B cell (primary cell): ENCODE measurements at regions of chr6 and their contacts with region 1.

Region 1: GRCh38 chr6:75208298-75209183 is 2.7 kb upstream of the COL12A1 start:
- DNase-seq: peak; percentile 87
- ATAC-seq: peak; percentile 80
- H3K4me3 ChIP-seq: peak overlapping the region in 4 of 5 experiments; percentile 10 to 41 (median 20)
- H3K4me3 Mint-ChIP-seq: peak overlapping the region; percentile 80
- H3K27ac ChIP-seq: no peak overlapping the region
- H3K27ac Mint-ChIP-seq: no peak overlapping the region
- H3K4me1 ChIP-seq: peaks cover 49 to 50% of the 10 kb centered on the region in 2 donors
- H3K4me1 Mint-ChIP-seq: peaks cover 52% of the 10 kb centered on the region
- H3K27me3 ChIP-seq: peaks cover 0 to 72% (median 52%) of the 10 kb centered on the region in 4 experiments
- H3K27me3 Mint-ChIP-seq: peaks cover 71% of the 10 kb centered on the region
- CTCF ChIP-seq: peak; percentile 84

Region 2: GRCh38 chr6:73675466-73676098 is 1533.0 kb before region 1 on chr6:
- CTCF ChIA-PET with region 1: interaction called, 45 read pairs
- POLR2A ChIA-PET with region 1: no interaction called
- intact Hi-C with region 1: loop called (anchors 2 kb)
- DNase-seq: peak; percentile 68
- ATAC-seq: peak; percentile 75
- H3K4me3 ChIP-seq: no peak overlapping the region
- H3K4me3 Mint-ChIP-seq: no peak overlapping the region
- H3K27ac ChIP-seq: no peak overlapping the region
- H3K27ac Mint-ChIP-seq: no peak overlapping the region
- H3K4me1 ChIP-seq: no peaks in the 10 kb centered on the region
- H3K4me1 Mint-ChIP-seq: no peaks in the 10 kb centered on the region
- H3K27me3 ChIP-seq: peaks cover 0 to 3% (median 0%) of the 10 kb centered on the region in 4 experiments
- H3K27me3 Mint-ChIP-seq: peaks cover 17% of the 10 kb centered on the region
- CTCF ChIP-seq: peak; percentile 96

Region 3: DNA sequence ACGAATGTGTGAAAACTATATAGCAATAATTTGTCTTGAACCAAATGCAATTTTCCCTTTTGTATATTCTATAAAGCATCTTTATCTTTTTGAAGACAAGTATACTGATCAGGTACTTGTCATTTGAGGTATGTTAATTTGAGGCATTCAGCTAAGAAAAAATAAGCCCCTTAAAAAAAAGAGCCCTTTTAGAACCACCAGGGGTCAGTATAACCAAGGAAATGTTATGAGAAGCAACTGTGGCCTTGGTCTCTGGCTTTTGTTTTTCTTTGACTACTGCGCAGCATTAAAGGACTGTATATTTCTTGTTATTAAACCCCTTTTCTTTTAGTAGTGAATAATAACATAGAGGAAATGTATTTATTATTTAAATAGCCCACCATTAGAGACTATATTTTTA is 1469.4 kb before region 1 on chr6:
- CTCF ChIA-PET with region 1: interaction called, 388 read pairs
- POLR2A ChIA-PET with region 1: no interaction called
- intact Hi-C with region 1: loop called (anchors 1 kb)
- DNase-seq: peak; percentile 74
- ATAC-seq: peak; percentile 51
- H3K4me3 ChIP-seq: no peak overlapping the region
- H3K4me3 Mint-ChIP-seq: no peak overlapping the region
- H3K27ac ChIP-seq: no peak overlapping the region
- H3K27ac Mint-ChIP-seq: no peak overlapping the region
- H3K4me1 ChIP-seq: no peaks in the 10 kb centered on the region
- H3K4me1 Mint-ChIP-seq: no peaks in the 10 kb centered on the region
- H3K27me3 ChIP-seq: no peaks in the 10 kb centered on the region
- H3K27me3 Mint-ChIP-seq: peaks cover 4% of the 10 kb centered on the region
- CTCF ChIP-seq: peak; percentile 90

Region 4: DNA sequence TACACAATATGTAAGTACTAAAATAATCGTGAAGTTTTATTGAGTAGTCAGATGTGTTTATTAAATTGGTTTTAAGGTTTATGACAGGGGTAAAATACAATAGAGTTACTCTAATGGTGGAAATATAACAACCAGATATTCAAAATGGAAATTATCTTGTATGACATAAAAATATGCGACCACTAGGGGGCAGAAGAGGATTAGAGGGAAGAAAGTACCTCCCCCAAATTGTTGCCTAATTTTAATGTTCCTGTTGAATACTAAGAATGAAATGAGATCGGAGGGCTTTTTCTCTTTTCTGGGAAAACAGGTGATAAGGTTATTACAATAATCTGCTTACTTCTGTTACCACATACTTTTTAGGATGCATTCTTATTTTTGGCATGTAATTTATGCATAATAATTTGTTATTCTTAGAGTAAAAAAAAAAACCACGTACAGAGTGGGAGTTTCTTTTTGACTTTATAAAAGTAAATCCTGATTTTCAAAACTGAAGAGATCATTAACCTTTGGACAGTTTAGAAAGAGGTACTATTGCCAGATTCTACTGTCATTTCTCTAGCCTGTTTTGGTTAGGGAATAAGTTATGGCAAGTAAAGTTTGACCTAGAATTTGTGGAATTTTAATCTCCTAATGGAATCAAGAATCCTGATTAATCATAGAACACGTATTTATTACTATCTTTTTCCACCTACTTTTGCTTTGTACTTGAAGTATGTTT is 1353.4 kb before region 1 on chr6:
- CTCF ChIA-PET with region 1: interaction called, 35 read pairs
- POLR2A ChIA-PET with region 1: no interaction called
- intact Hi-C with region 1: loop called (anchors 1 kb)
- DNase-seq: peak; percentile 46
- ATAC-seq: no peak
- H3K4me3 ChIP-seq: no peak overlapping the region
- H3K4me3 Mint-ChIP-seq: no peak overlapping the region
- H3K27ac ChIP-seq: no peak overlapping the region
- H3K27ac Mint-ChIP-seq: no peak overlapping the region
- H3K4me1 ChIP-seq: no peaks in the 10 kb centered on the region
- H3K4me1 Mint-ChIP-seq: no peaks in the 10 kb centered on the region
- H3K27me3 ChIP-seq: no peaks in the 10 kb centered on the region
- H3K27me3 Mint-ChIP-seq: peaks cover 6% of the 10 kb centered on the region
- CTCF ChIP-seq: peak; percentile 74

Region 5: GRCh38 chr6:74091136-74091793 is 1117.3 kb before region 1 on chr6:
- CTCF ChIA-PET with region 1: interaction called, 31 read pairs
- POLR2A ChIA-PET with region 1: no interaction called
- intact Hi-C with region 1: no loop called
- DNase-seq: peak; percentile 12
- ATAC-seq: no peak
- H3K4me3 ChIP-seq: no peak overlapping the region
- H3K4me3 Mint-ChIP-seq: no peak overlapping the region
- H3K27ac ChIP-seq: no peak overlapping the region
- H3K27ac Mint-ChIP-seq: no peak overlapping the region
- H3K4me1 ChIP-seq: no peaks in the 10 kb centered on the region
- H3K4me1 Mint-ChIP-seq: no peaks in the 10 kb centered on the region
- H3K27me3 ChIP-seq: no peaks in the 10 kb centered on the region
- H3K27me3 Mint-ChIP-seq: no peaks in the 10 kb centered on the region
- CTCF ChIP-seq: peak; percentile 74

Region 6: DNA sequence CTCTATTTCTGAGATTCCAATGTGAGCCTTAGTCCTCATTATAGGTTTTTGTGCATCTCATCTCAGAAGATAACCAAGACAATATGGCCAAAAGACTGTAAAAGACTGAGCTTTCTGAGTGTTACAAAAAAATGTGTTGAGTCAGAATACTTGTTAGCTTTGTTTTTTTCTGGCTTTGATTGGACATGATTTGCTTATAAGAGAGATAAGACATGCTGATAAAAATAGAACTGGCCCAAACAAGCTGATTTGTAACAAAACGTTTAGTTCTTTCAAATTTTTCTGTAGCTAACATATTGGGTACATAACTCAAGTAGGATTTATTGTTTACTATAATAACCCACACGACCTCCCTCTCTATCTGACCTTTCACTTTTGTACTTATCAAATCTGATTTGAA is 252.1 kb after region 1 on chr6:
- CTCF ChIA-PET with region 1: no interaction called
- POLR2A ChIA-PET with region 1: no interaction called
- intact Hi-C with region 1: no loop called
- DNase-seq: no peak
- ATAC-seq: no peak
- H3K4me3 ChIP-seq: no peak overlapping the region
- H3K4me3 Mint-ChIP-seq: no peak overlapping the region
- H3K27ac ChIP-seq: no peak overlapping the region
- H3K27ac Mint-ChIP-seq: no peak overlapping the region
- H3K4me1 ChIP-seq: no peaks in the 10 kb centered on the region
- H3K4me1 Mint-ChIP-seq: no peaks in the 10 kb centered on the region
- H3K27me3 ChIP-seq: no peaks in the 10 kb centered on the region
- H3K27me3 Mint-ChIP-seq: peaks cover 4% of the 10 kb centered on the region
- CTCF ChIP-seq: no peak

Region 7: GRCh38 chr6:75526502-75527127 is 318.1 kb after region 1 on chr6:
- CTCF ChIA-PET with region 1: interaction called, 3 read pairs
- POLR2A ChIA-PET with region 1: no interaction called
- intact Hi-C with region 1: loop called (anchors 2 kb)
- DNase-seq: peak; percentile 60
- ATAC-seq: no peak
- H3K4me3 ChIP-seq: no peak overlapping the region
- H3K4me3 Mint-ChIP-seq: no peak overlapping the region
- H3K27ac ChIP-seq: no peak overlapping the region
- H3K27ac Mint-ChIP-seq: no peak overlapping the region
- H3K4me1 ChIP-seq: no peaks in the 10 kb centered on the region
- H3K4me1 Mint-ChIP-seq: no peaks in the 10 kb centered on the region
- H3K27me3 ChIP-seq: peaks cover 0 to 8% (median 1%) of the 10 kb centered on the region in 4 experiments
- H3K27me3 Mint-ChIP-seq: peaks cover 39% of the 10 kb centered on the region
- CTCF ChIP-seq: peak; percentile 73